GM10248 (cell line): ENCODE measurements at regions of chr5 and their contacts with region 1.

Region 1: DNA sequence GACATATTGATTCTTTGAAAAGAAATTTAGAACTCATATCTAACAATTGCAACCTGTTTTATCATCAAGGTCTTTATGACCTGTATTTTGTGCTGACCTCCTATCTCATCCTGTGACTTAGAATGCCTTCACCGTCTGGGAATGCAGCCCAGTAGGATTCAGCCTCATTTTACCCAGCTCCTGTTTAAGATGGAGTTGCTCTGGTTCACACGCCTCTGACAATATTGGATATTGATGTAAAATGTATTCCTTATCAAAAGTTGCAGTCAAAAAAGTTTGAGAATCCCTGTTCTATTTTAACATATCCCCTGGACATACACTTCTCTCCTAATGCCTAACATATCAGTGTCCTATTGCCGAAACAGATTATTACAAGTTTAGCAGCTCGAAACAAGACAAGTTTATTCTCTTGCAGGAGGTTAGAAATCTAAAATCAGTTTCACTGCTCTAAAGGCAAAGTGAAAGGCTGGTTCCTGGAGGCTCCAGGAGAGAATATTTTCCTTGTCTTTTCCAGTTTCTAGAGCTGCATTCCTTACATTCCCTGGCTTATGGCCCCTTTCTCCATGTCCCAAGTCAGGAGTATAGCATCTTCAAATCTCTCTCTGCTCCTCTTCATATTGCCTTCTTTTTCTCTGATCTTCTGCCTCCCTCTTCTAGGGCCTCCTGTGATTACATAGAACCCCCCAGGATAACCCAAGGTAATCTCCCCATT is 31.5 kb upstream of the LVRN start:
- DNase-seq: no peak
- CTCF ChIP-seq: no peak

Region 2: DNA sequence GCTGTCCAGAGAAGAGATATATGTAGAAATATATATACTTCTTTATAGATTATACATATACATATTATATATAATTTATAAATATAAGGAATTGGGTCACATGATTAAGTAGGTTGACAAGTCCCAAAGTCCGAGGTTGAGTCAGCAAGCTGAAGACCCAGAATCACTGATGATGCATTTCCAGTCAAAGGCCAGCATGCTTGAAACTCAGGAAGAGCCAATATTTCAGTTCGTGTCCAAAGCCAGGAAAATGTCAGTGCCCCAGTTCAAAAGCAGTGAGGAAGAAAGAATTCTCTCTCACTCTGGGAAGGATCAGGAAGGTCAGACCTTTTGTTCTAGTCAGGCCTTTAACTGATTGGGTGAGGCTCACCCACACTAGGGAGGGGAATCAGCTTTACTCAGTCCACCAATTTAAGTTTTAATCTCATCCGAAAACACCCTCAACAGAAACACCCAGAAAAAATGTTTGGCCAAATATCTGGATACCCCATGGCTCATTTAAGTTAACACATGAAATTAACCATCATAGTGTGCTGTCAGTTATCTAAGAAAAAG is 10.5 kb before region 1 on chr5:
- CTCF ChIA-PET with region 1: interaction called, 14 read pairs
- POLR2A ChIA-PET with region 1: no interaction called
- DNase-seq: no peak
- CTCF ChIP-seq: no peak